Calu3 (cell line): ENCODE measurements at regions of chr1 and their contacts with region 1.

Region 1: DNA sequence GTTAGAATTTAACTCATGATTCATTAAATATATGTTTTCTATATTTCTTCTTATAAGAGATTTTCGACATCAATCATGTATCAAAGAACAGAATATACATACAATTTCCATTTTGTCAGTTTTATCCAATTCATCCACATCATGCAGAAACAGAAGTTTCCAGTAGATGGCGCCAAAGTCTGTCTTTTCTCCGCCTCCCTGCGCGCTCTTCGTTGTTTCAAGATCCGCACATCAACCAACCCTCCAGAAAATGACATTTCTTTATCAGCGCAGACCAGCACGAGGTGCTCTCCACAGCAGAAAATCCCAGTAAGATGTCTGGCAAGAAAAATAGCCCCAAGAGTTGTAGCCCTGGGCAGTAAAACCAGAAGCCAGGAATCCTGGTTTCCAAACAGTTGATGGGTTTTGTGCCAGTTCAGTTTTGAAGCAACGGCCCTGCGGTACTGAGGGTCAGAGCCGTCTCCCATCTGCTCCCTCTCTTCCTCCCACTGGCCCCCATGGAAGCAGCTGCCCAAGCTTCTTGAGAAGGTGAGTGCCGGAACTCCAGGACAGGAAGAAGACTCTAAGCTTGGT is 38.6 kb upstream of the GPR137B start:
- DNase-seq: peak; percentile 60
- H3K4me3 Mint-ChIP-seq: no peak overlapping the region
- H3K27ac Mint-ChIP-seq: no peak overlapping the region
- H3K4me1 Mint-ChIP-seq: no peaks in the 10 kb centered on the region
- H3K27me3 Mint-ChIP-seq: no peaks in the 10 kb centered on the region
- CTCF ChIP-seq: peak; percentile 85

Region 2: GRCh38 chr1:236168716-236169429 is 65.1 kb after region 1 on chr1:
- CTCF ChIA-PET with region 1: no interaction called
- intact Hi-C with region 1: loop called (anchors 2 kb)
- DNase-seq: peak; percentile 79
- H3K4me3 Mint-ChIP-seq: peak overlapping the region; percentile 16
- H3K27ac Mint-ChIP-seq: peak overlapping the region; percentile 64
- H3K4me1 Mint-ChIP-seq: peaks cover 15% of the 10 kb centered on the region
- H3K27me3 Mint-ChIP-seq: no peaks in the 10 kb centered on the region
- CTCF ChIP-seq: peak; percentile 47

Region 3: GRCh38 chr1:236345728-236346127 is 242.0 kb after region 1 on chr1:
- CTCF ChIA-PET with region 1: no interaction called
- intact Hi-C with region 1: loop called (anchors 2 kb)
- DNase-seq: no peak
- H3K4me3 Mint-ChIP-seq: no peak overlapping the region
- H3K27ac Mint-ChIP-seq: no peak overlapping the region
- H3K4me1 Mint-ChIP-seq: no peaks in the 10 kb centered on the region
- H3K27me3 Mint-ChIP-seq: no peaks in the 10 kb centered on the region
- CTCF ChIP-seq: no peak

Region 4: DNA sequence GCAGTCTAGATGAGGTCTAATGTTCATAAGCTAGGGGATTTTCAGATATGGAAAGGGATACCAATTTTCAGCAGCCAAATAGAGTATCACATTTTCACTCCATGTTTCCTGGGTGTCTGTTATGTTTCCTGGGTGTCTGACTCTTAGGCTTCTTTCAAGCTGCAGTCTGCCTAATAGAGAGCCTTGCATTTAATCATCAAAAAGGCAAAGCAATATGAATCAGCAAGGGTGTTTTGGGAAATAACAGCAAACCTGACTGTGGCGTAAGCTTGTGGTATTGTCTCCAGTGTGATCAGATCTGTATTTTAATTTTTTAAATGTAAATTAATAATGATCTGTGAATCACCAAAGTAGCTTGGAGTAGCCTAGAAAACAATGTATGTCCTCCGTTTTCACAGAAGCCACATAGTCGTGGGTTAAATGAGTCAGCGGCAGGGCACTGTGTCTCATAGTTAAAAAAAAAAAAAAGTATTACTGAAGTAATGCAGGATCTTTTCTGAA is 430.5 kb after region 1 on chr1:
- CTCF ChIA-PET with region 1: interaction called, 3 read pairs
- intact Hi-C with region 1: loop called (anchors 1 kb)
- DNase-seq: no peak
- H3K4me3 Mint-ChIP-seq: no peak overlapping the region
- H3K27ac Mint-ChIP-seq: no peak overlapping the region
- H3K4me1 Mint-ChIP-seq: peaks cover 22% of the 10 kb centered on the region
- H3K27me3 Mint-ChIP-seq: no peaks in the 10 kb centered on the region
- CTCF ChIP-seq: no peak

Region 5: DNA sequence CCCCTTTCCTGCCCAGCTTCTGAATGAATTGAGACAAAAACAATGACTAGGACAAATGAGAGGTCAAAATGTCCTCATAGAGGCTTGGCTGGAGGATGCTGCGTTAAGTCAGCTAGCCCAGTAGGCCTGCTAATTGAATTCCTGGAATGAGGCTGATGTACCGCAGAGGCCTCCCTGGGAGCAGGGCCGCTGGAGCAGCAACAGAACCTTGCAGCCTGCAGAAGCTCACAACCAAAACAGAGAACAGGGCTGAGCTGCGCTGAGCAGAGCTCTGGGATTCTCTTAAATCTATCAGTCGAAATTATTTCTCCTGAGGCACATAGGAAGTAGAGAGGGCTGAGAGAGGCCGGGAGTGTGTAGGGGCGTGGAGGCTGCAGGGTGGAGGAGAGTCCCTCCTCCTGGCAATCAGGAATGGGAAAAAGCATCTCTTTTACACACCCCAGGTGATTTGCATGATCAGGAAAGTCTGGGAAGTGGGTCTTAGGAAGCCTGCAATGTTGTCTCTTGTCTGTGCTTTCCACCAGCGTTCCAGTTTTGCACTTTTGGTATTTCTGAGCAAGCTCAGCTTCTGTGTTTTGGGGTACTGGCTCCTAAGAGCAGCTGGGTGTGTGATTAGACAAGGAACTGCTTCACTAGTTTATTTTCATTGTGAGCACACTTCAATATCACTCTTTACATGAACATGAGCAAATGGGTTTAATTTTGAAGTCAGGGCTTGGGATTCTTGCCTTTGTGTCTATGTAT is 1004.7 kb after region 1 on chr1:
- CTCF ChIA-PET with region 1: no interaction called
- intact Hi-C with region 1: no loop called
- DNase-seq: no peak
- H3K4me3 Mint-ChIP-seq: no peak overlapping the region
- H3K27ac Mint-ChIP-seq: no peak overlapping the region
- H3K4me1 Mint-ChIP-seq: no peaks in the 10 kb centered on the region
- H3K27me3 Mint-ChIP-seq: no peaks in the 10 kb centered on the region
- CTCF ChIP-seq: no peak

Region 6: DNA sequence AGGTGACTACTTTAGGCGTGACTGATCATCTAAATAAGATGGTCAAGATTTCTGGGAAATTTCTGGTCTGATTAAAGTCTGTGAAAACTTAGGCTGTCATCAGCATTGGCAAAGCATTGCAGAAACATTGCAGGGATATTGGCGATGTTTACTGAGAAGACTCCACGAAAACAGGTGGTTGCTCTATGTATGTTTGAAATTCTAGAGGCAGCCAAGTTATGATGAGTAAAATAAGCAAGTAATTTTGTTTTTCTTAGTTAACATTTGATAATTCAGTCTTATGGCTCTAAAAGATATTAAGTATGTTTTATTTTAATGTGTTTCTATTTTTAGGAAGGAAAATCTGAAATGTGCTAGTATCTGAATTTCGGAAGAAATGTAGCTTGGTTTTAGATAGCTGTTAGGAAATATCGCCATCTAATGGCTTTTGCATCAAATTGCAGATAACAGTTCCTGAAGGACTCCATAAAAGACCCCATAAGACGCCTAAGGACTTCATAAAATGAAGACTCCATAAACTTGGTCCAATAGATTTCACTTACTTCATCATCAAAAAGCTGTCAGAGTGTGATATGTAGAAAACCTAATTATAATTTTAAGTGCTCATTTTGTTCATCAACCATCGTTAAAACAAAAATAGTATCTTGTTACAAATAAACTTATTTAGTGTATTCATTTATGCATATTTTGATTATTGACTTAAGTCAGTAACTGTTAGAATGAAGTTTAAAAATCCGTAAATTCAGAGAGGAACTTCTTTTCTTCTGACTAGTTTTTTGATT is 1282.8 kb after region 1 on chr1:
- CTCF ChIA-PET with region 1: no interaction called
- intact Hi-C with region 1: loop called (anchors 5 kb)
- DNase-seq: no peak
- H3K4me3 Mint-ChIP-seq: no peak overlapping the region
- H3K27ac Mint-ChIP-seq: no peak overlapping the region
- H3K4me1 Mint-ChIP-seq: no peaks in the 10 kb centered on the region
- H3K27me3 Mint-ChIP-seq: no peaks in the 10 kb centered on the region
- CTCF ChIP-seq: peak; percentile 62